MCF 10A (cell line): ENCODE measurements at regions of chr1 and their contacts with region 1.

Region 1: DNA sequence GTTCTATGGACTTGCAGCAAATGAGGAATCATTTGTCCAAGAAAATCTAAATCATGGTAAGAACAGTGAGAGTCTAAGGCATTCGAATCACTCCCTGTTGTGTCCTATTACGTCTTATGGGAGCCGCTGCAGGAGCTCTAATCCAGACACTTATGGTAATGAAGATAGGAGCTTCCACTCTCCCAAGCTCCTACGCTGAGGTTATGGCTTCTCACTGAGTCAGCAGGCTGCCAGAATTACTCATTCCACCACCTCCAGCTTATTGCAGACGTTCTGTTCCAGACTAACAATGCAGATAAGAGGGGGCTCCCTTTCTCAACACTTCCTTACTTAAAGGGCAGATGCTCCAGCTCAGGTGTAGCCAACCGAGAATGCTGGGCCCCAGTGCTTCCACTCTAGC is 212.6 kb downstream of the GREM2 start:
- DNase-seq: peak; percentile 94
- H3K4me3 Mint-ChIP-seq: no peak overlapping the region
- H3K27ac Mint-ChIP-seq: peak overlapping the region; percentile 83
- H3K4me1 Mint-ChIP-seq: peaks cover 27% of the 10 kb centered on the region
- H3K27me3 Mint-ChIP-seq: no peaks in the 10 kb centered on the region
- CTCF ChIP-seq: no peak

Region 2: DNA sequence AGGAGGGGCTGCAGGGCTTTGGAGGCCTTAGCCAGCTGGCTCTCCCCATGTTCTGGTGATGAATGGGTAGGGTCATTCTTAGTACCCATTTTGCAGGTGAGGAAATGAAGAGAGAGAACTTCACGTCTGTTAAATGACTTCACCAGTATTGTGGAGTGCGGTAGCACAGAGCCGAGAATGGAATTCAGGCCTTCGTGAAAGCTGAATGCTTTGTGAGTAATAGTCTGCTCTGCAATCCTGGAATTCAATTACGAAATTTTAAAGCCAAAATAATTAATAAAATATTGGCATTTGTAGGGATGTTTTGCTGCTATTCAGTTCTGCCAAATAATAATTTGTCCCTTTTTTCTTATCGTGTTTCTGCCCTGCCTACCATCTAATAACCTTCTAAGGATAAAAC is 14.9 kb after region 1 on chr1:
- CTCF ChIA-PET with region 1: interaction called, 10 read pairs
- POLR2A ChIA-PET with region 1: interaction called, 23 read pairs
- intact Hi-C with region 1: no loop called
- DNase-seq: peak; percentile 79
- H3K4me3 Mint-ChIP-seq: no peak overlapping the region
- H3K27ac Mint-ChIP-seq: peak overlapping the region; percentile 72
- H3K4me1 Mint-ChIP-seq: peaks cover 38% of the 10 kb centered on the region
- H3K27me3 Mint-ChIP-seq: no peaks in the 10 kb centered on the region
- CTCF ChIP-seq: no peak

Region 3: DNA sequence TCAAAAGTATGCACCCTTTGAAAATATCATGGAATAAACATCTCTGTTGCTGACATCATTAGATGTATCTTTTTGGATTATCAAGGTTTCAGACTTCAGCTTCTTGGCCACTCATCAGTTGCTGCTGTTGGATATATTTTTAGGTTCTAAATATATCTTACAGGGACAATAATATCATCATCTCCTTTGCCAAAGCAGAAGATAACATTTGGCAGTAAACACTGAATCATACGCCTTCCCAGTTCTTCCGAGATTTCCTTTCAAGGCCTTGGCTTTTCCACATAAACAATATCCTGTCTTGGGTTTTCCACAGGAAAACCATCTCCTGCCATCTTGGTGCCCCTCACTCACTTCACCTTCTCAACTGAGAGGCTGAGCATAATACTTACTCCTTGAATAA is 918.3 kb after region 1 on chr1:
- CTCF ChIA-PET with region 1: no interaction called
- POLR2A ChIA-PET with region 1: no interaction called
- intact Hi-C with region 1: no loop called
- DNase-seq: no peak
- H3K4me3 Mint-ChIP-seq: no peak overlapping the region
- H3K27ac Mint-ChIP-seq: no peak overlapping the region
- H3K4me1 Mint-ChIP-seq: no peaks in the 10 kb centered on the region
- H3K27me3 Mint-ChIP-seq: peaks cover 18% of the 10 kb centered on the region
- CTCF ChIP-seq: no peak